CD14-positive monocyte (primary cell): ENCODE measurements at regions of chr20 and their contacts with region 1.

Region 1: DNA sequence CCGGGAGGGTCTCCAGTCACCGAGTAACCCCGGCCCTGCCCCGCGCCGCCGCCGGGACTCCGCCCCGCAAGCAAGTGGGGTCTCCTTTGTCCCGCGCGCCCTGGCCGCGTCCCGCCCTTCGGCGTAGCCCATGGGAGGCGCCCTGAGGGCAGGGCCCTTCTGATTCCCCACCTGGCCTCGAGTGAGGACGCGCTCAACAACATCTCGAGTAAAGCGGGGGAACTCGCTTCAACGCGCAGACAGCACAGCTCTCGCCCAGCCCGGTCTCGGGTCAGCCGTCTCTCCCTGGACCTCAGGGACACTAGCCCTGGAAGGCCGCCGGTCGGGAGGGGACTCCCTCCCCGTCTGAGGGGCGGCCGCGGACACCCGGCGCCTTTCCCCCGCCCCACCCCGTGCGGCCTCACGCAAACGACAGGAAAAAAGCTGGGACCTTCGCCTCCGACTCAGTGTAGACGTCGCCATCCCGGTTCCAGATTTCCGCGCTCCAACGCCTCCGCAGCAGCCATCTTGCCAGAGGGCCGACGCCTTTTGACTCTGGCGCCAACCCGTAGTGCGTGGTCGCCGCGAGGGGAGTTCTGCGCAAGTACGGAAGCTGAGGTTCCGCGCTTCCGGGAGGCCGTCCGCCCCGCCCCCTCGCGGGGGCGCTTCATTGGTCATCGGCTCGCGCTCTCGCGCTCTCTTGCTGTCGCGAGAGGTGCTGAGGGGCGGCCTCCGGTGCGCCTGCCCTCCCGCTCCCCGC is 412 bp upstream of the GID8 start:
- DNase-seq: peak; percentile 94 to 97 (median 97)
- H3K4me3 ChIP-seq: peak overlapping the region; percentile 94 to 99 (median 97)
- H3K4me3 Mint-ChIP-seq: peak overlapping the region; percentile 92 to 96
- H3K27ac ChIP-seq: peak overlapping the region; percentile 59 to 88
- H3K27ac Mint-ChIP-seq: peak overlapping the region; percentile 78 to 96 (median 90)
- H3K4me1 ChIP-seq: peaks cover 27 to 36% of the 10 kb centered on the region in 2 donors
- H3K4me1 Mint-ChIP-seq: peaks cover 28% of the 10 kb centered on the region
- H3K27me3 ChIP-seq: no peaks in the 10 kb centered on the region
- H3K27me3 Mint-ChIP-seq: peaks cover 0 to 1% (median 0%) of the 10 kb centered on the region in 3 donors
- CTCF ChIP-seq: no peak

Region 2: DNA sequence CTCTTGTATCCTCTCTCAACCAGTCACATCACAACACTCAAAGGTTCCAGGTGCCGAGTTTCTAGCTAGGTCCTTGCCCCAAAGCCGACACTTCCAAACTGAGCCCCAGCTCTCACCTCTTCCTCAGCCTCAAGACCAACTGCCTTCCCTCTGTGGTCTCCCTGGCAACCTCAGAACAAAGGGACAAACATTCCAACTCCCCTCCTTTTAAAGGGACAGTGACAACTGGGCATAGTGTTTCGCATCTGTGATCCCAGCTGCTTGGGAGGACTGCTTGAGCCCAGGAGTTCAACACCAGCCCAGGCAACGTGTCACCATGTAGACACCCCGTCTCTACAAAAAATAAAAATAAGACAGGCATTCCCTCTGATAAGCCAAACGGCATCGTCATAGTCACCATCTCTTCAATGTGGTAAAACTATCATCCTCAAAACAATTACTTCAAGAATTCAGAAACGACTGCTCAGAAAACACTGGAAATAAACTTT is 22.5 kb before region 1 on chr20:
- intact Hi-C with region 1: no loop called
- DNase-seq: peak in 2 of 3 donors; percentile 16 to 18
- H3K4me3 ChIP-seq: no peak overlapping the region
- H3K4me3 Mint-ChIP-seq: no peak overlapping the region
- H3K27ac ChIP-seq: peak overlapping the region in 1 of 2 donors; percentile 62
- H3K27ac Mint-ChIP-seq: peak overlapping the region; percentile 40 to 80 (median 72)
- H3K4me1 ChIP-seq: peaks cover 21 to 35% of the 10 kb centered on the region in 2 donors
- H3K4me1 Mint-ChIP-seq: peaks cover 45% of the 10 kb centered on the region
- H3K27me3 ChIP-seq: no peaks in the 10 kb centered on the region
- H3K27me3 Mint-ChIP-seq: peaks cover 0 to 4% (median 0%) of the 10 kb centered on the region in 3 donors
- CTCF ChIP-seq: no peak

Region 3: DNA sequence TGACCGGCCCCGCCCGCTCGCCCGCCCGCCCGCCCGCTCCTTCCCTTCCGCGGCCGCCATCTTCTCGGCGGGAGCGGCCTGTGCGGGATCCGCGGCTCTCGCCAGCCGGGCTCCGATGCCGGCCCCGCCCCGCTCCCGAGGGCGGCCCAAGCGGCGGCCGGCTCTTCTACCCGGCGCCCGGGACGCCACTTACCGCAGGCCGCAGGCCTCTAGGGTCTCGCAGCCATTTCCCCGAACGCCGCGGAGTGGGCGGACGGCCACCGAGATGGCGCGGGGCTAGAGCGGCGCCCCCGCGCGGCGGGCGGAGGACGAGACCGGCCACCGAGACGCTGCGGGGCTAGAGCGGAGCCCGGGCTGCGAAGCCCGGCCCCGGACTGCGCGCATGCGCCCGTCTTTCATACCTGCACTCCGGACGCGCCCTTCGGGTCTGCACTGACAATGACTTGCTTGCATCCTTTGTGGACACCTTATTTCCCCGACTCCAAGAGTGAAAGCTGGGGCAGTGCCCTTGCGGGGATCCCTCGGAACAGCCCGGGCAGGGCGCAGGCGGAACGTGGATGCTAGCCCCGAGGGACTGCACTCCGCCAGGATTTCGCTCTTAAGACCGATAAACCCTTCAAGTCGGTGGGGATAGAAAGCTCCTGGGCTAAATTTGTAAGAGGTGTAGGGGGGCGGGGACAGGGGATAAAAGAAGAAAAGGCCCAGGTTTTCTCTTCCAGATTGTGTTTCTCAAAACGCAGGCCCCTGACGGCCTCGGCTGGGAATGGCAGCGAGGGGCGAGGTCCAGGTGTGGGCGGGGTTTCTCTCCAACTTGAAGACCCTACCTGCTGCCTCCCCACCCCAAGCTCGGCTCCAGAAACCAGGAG is 11.1 kb before region 1 on chr20 and contains the start of gene DIDO1:
- intact Hi-C with region 1: loop called in 1 of 2 experiments (anchors 2 kb)
- DNase-seq: peak; percentile 76 to 84 (median 78)
- H3K4me3 ChIP-seq: peak within 1 kb of the TSS; percentile 84 to 91 (median 88)
- H3K4me3 Mint-ChIP-seq: peak within 1 kb of the TSS; percentile 96 to 97
- H3K27ac ChIP-seq: peak within 1 kb of the TSS; percentile 94 to 97
- H3K27ac Mint-ChIP-seq: peak within 1 kb of the TSS; percentile 91 to 96 (median 95)
- H3K4me1 ChIP-seq: peaks cover 47 to 60% of the 10 kb centered on the region in 2 donors
- H3K4me1 Mint-ChIP-seq: peaks cover 58% of the 10 kb centered on the region
- H3K27me3 ChIP-seq: no peaks in the 10 kb centered on the region
- H3K27me3 Mint-ChIP-seq: no peaks in the 10 kb centered on the region
- CTCF ChIP-seq: peak; percentile 84
- polyA plus RNA-seq, gene DIDO1: 8.5 to 23.8 (median 12.9) TPM

Region 4: GRCh38 chr20:62953839-62954703 is 16.5 kb after region 1 on chr20:
- intact Hi-C with region 1: loop called (anchors 2 kb)
- DNase-seq: peak; percentile 85 to 88 (median 87)
- H3K4me3 ChIP-seq: peak overlapping the region; percentile 36 to 70 (median 50)
- H3K4me3 Mint-ChIP-seq: peak overlapping the region; percentile 79 to 86
- H3K27ac ChIP-seq: peak overlapping the region; percentile 88 to 90
- H3K27ac Mint-ChIP-seq: peak overlapping the region; percentile 88 to 91 (median 90)
- H3K4me1 ChIP-seq: peaks cover 34 to 38% of the 10 kb centered on the region in 2 donors
- H3K4me1 Mint-ChIP-seq: peaks cover 43% of the 10 kb centered on the region
- H3K27me3 ChIP-seq: no peaks in the 10 kb centered on the region
- H3K27me3 Mint-ChIP-seq: no peaks in the 10 kb centered on the region
- CTCF ChIP-seq: no peak

Region 5: GRCh38 chr20:63216041-63216848 is 278.7 kb after region 1 on chr20 and contains the start of gene YTHDF1:
- intact Hi-C with region 1: loop called in 1 of 2 experiments (anchors 10 kb)
- DNase-seq: peak; percentile 93 to 96 (median 94)
- H3K4me3 ChIP-seq: peak within 1 kb of the TSS; percentile 69 to 89 (median 88)
- H3K4me3 Mint-ChIP-seq: peak within 1 kb of the TSS; percentile 91 to 93
- H3K27ac ChIP-seq: peak within 1 kb of the TSS; percentile 62 to 86
- H3K27ac Mint-ChIP-seq: peak within 1 kb of the TSS; percentile 85 to 95 (median 91)
- H3K4me1 ChIP-seq: peaks cover 15 to 19% of the 10 kb centered on the region in 2 donors
- H3K4me1 Mint-ChIP-seq: peaks cover 24% of the 10 kb centered on the region
- H3K27me3 ChIP-seq: peaks cover 0 to 3% of the 10 kb centered on the region in 2 donors
- H3K27me3 Mint-ChIP-seq: peaks cover 5 to 9% (median 6%) of the 10 kb centered on the region in 3 donors
- CTCF ChIP-seq: no peak
- polyA plus RNA-seq, gene YTHDF1: 18.0 to 33.4 (median 25.9) TPM